Activated naive CD4-positive, alpha-beta T cell treated with anti-CD3 and anti-CD28 coated beads, Interleukin-2, amount 10 ng/mL, durations not matched to agents 7 days and 5 days (primary cell): ENCODE measurements at regions of chr6 and their contacts with region 1.

Region 1: GRCh38 chr6:15879382-15880261 is 216.8 kb upstream of the DTNBP1 start:
- DNase-seq: peak; percentile 44
- H3K4me3 Mint-ChIP-seq: no peak overlapping the region
- H3K27ac Mint-ChIP-seq: no peak overlapping the region
- H3K4me1 Mint-ChIP-seq: peaks cover 21% of the 10 kb centered on the region
- H3K27me3 Mint-ChIP-seq: peaks cover 5% of the 10 kb centered on the region

Region 2: GRCh38 chr6:15854826-15855710 is 24.6 kb before region 1 on chr6:
- CTCF ChIA-PET with region 1: no interaction called
- DNase-seq: no peak
- H3K4me3 Mint-ChIP-seq: no peak overlapping the region
- H3K27ac Mint-ChIP-seq: no peak overlapping the region
- H3K4me1 Mint-ChIP-seq: no peaks in the 10 kb centered on the region
- H3K27me3 Mint-ChIP-seq: peaks cover 5% of the 10 kb centered on the region

Region 3: GRCh38 chr6:15901141-15902115 is 21.8 kb after region 1 on chr6:
- CTCF ChIA-PET with region 1: interaction called, 11 read pairs
- DNase-seq: peak; percentile 30
- H3K4me3 Mint-ChIP-seq: no peak overlapping the region
- H3K27ac Mint-ChIP-seq: peak overlapping the region; percentile 88
- H3K4me1 Mint-ChIP-seq: peaks cover 20% of the 10 kb centered on the region
- H3K27me3 Mint-ChIP-seq: peaks cover 3% of the 10 kb centered on the region

Region 4: GRCh38 chr6:15962449-15962764 is 82.8 kb after region 1 on chr6:
- CTCF ChIA-PET with region 1: no interaction called
- DNase-seq: no peak
- H3K4me3 Mint-ChIP-seq: no peak overlapping the region
- H3K27ac Mint-ChIP-seq: peak overlapping the region; percentile 1
- H3K4me1 Mint-ChIP-seq: peaks cover 12% of the 10 kb centered on the region
- H3K27me3 Mint-ChIP-seq: no peaks in the 10 kb centered on the region